Spleen (tissue), 13 donors: ENCODE measurements at regions of chr20 and their contacts with region 1.

Region 1: GRCh38 chr20:54649511-54649962 is 174.1 kb downstream of the DOK5 start:
- DNase-seq: no peak
- H3K4me3 ChIP-seq: no peak overlapping the region
- H3K27ac ChIP-seq: no peak overlapping the region
- H3K4me1 ChIP-seq: peaks cover 0 to 3% (median 0%) of the 10 kb centered on the region in 6 donors
- H3K27me3 ChIP-seq: peaks cover 0 to 7% (median 0%) of the 10 kb centered on the region in 7 donors
- CTCF ChIP-seq: peak in 10 of 11 experiments; percentile 21 to 78 (median 64)
- POLR2A ChIP-seq: no peak

Region 2: DNA sequence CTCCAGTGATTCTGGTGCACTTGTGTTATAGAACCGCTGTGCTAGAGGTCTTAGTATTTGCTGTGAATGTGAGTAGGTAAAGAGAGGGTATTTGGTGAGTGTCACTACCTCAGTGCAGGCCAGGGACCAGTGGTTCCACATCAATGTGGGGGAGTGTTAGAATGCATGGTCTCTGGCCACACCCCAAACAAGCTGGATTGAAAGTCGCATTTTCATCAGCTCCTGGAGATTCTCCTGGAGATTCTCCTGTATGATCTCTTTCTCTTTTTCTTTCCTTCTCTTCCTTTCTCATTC is 552.4 kb before region 1 on chr20:
- intact Hi-C with region 1: loop called (anchors 5 kb)
- DNase-seq: no peak
- H3K4me3 ChIP-seq: no peak overlapping the region
- H3K27ac ChIP-seq: no peak overlapping the region
- H3K4me1 ChIP-seq: no peaks in the 10 kb centered on the region
- H3K27me3 ChIP-seq: peaks cover 0 to 14% (median 0%) of the 10 kb centered on the region in 7 donors
- CTCF ChIP-seq: no peak
- POLR2A ChIP-seq: no peak

Region 3: GRCh38 chr20:54219751-54220426 is 429.6 kb before region 1 on chr20:
- intact Hi-C with region 1: loop called (anchors 10 kb)
- DNase-seq: no peak
- H3K4me3 ChIP-seq: no peak overlapping the region
- H3K27ac ChIP-seq: no peak overlapping the region
- H3K4me1 ChIP-seq: peaks cover 0 to 22% (median 8%) of the 10 kb centered on the region in 6 donors
- H3K27me3 ChIP-seq: no peaks in the 10 kb centered on the region
- CTCF ChIP-seq: peak in 6 of 11 experiments; percentile 13 to 48 (median 29)
- POLR2A ChIP-seq: no peak